ENCODE measurements at regions of chr4 and their contacts with region 1.

Region 1: GRCh38 chr4:74376888-74377483 is 12.0 kb downstream of the EREG start:
- DNase-seq: peak; percentile 46
- H3K4me3 ChIP-seq: peak overlapping the region in 2 of 3 experiments; percentile 23 to 37
- H3K27ac ChIP-seq: peak overlapping the region; percentile 98
- H3K4me1 ChIP-seq: peaks cover 43% of the 10 kb centered on the region
- H3K27me3 ChIP-seq: no peaks in the 10 kb centered on the region
- CTCF ChIP-seq: peak; percentile 46 to 68

Region 2: DNA sequence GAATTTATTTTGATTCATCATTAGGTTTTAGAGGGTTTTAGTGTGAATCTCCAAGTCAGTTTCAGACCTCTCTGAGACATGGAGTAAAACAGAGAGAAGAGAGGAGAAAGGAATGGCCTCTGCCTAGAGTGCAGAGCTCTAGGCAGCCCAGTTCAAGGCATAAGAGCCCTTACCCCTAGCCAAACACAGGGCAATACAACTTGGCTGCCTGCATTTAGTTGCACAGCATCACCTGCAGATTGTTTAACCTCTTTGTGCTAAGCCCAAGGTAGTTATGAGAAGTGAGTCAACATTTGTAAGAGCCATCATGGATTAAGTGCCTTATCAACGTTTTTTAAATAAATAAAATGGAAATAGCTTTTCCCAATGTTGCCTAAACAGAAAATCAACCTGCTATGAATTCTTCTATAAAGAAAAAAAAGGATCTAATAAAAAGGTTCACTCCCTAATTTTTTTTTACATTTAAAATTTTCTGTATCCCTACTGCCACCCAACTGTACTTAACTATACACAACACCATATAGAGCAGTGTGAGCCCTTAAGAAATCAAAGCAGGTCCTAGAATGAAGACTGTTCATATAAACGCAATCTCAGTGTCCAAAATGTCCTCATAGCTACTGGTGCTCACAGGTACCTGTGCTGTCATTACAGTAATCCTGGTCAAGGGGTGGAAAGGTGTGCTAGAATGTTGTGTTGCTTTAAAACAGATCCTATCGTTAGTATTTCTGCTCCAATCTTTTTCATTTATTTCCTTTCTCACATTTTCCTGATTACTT is 431.1 kb before region 1 on chr4:
- CTCF ChIA-PET with region 1: no interaction called
- dilution Hi-C with region 1: no loop called
- in situ Hi-C with region 1: no loop called
- intact Hi-C with region 1: no loop called
- DNase-seq: no peak
- H3K4me3 ChIP-seq: no peak overlapping the region
- H3K27ac ChIP-seq: no peak overlapping the region
- H3K4me1 ChIP-seq: peaks cover 9% of the 10 kb centered on the region
- H3K27me3 ChIP-seq: no peaks in the 10 kb centered on the region
- CTCF ChIP-seq: no peak

Region 3: GRCh38 chr4:74016068-74016467 is 360.9 kb before region 1 on chr4:
- CTCF ChIA-PET with region 1: no interaction called
- dilution Hi-C with region 1: no loop called
- in situ Hi-C with region 1: no loop called
- intact Hi-C with region 1: no loop called
- DNase-seq: peak; percentile 78
- H3K4me3 ChIP-seq: no peak overlapping the region
- H3K27ac ChIP-seq: no peak overlapping the region
- H3K4me1 ChIP-seq: no peaks in the 10 kb centered on the region
- H3K27me3 ChIP-seq: no peaks in the 10 kb centered on the region
- CTCF ChIP-seq: no peak

Region 4: DNA sequence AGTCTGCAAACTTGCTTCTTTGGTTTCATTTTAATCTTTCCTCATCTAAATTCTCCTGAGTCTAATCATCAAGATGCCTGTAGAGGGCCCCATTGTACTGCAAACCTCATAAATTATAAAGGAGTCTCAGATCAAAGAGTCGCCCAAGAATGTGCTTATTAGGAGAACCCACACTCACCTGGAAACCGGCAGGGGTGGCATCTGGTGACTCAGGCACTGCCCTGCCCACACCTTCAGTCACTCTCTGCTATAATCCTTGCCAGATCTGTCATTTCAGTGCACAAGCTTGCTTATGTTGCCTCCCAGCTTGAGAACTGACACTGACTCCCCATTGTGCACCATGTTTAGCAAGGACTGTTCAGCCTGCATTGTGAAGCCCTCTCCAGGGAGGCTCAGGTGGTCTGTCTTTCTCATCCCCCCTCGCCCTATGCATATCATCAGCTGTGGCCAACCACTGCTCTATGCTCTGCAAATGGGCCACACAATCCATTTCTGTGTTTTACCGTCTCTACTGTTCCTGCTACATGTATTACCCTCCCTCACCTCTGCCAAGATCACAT is 56.3 kb before region 1 on chr4:
- CTCF ChIA-PET with region 1: no interaction called
- dilution Hi-C with region 1: no loop called
- in situ Hi-C with region 1: no loop called
- intact Hi-C with region 1: loop called (anchors 1 kb)
- DNase-seq: peak; percentile 90
- H3K4me3 ChIP-seq: no peak overlapping the region
- H3K27ac ChIP-seq: peak overlapping the region; percentile 20
- H3K4me1 ChIP-seq: peaks cover 15% of the 10 kb centered on the region
- H3K27me3 ChIP-seq: no peaks in the 10 kb centered on the region
- CTCF ChIP-seq: peak; percentile 50 to 66

Region 5: GRCh38 chr4:74331252-74331651 is 45.7 kb before region 1 on chr4:
- CTCF ChIA-PET with region 1: no interaction called
- dilution Hi-C with region 1: no loop called
- in situ Hi-C with region 1: no loop called
- intact Hi-C with region 1: no loop called
- DNase-seq: no peak
- H3K4me3 ChIP-seq: no peak overlapping the region
- H3K27ac ChIP-seq: no peak overlapping the region
- H3K4me1 ChIP-seq: peaks cover 22% of the 10 kb centered on the region
- H3K27me3 ChIP-seq: no peaks in the 10 kb centered on the region
- CTCF ChIP-seq: no peak

Region 6: DNA sequence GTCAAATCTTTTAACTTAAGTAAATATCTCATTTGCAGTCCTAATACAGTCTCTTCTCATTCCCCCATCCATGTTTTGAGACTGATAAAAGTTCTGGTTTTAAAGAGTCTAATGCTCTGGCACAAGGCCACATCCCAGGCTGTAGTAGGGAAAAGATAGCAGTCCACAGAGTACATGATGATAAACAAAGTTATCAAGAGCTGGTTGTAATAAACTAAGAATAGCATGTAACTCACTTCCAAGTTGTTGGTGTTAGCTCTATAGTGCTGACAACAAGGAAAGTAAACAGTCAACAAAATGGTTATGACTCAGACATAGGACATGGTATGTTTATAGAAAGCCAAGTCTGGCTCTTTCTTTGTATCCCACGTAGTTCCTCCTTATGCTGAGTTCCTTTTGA is 46.1 kb after region 1 on chr4:
- CTCF ChIA-PET with region 1: no interaction called
- dilution Hi-C with region 1: loop called (anchors 5 kb)
- in situ Hi-C with region 1: no loop called
- intact Hi-C with region 1: no loop called
- DNase-seq: no peak
- H3K4me3 ChIP-seq: no peak overlapping the region
- H3K27ac ChIP-seq: peak overlapping the region; percentile 12
- H3K4me1 ChIP-seq: peaks cover 43% of the 10 kb centered on the region
- H3K27me3 ChIP-seq: no peaks in the 10 kb centered on the region
- CTCF ChIP-seq: no peak

Region 7: GRCh38 chr4:74444891-74445642 is 68.1 kb after region 1 on chr4 and contains the start of gene AREG:
- CTCF ChIA-PET with region 1: no interaction called
- dilution Hi-C with region 1: no loop called
- in situ Hi-C with region 1: loop called in 1 of 2 experiments (anchors 5 kb)
- intact Hi-C with region 1: loop called (anchors 1 kb)
- DNase-seq: peak; percentile 92
- H3K4me3 ChIP-seq: peak within 1 kb of the TSS; percentile 83 to 93 (median 93)
- H3K27ac ChIP-seq: peak within 1 kb of the TSS; percentile 99
- H3K4me1 ChIP-seq: peaks cover 34% of the 10 kb centered on the region
- H3K27me3 ChIP-seq: no peaks in the 10 kb centered on the region
- CTCF ChIP-seq: peak; percentile 24 to 63
- total RNA-seq, gene AREG: 540 to 2,145 TPM

Region 8: GRCh38 chr4:74531963-74532794 is 155.2 kb after region 1 on chr4:
- CTCF ChIA-PET with region 1: no interaction called
- dilution Hi-C with region 1: loop called (anchors 25 kb)
- in situ Hi-C with region 1: loop called (anchors 10 kb)
- intact Hi-C with region 1: loop called (anchors 1 kb)
- DNase-seq: peak; percentile 78
- H3K4me3 ChIP-seq: no peak overlapping the region
- H3K27ac ChIP-seq: peak overlapping the region; percentile 43
- H3K4me1 ChIP-seq: peaks cover 13% of the 10 kb centered on the region
- H3K27me3 ChIP-seq: no peaks in the 10 kb centered on the region
- CTCF ChIP-seq: peak; percentile 73 to 85